Gastrocnemius medialis (tissue), 4 donors: ENCODE measurements at regions of chr20 and their contacts with region 1.

Region 1: DNA sequence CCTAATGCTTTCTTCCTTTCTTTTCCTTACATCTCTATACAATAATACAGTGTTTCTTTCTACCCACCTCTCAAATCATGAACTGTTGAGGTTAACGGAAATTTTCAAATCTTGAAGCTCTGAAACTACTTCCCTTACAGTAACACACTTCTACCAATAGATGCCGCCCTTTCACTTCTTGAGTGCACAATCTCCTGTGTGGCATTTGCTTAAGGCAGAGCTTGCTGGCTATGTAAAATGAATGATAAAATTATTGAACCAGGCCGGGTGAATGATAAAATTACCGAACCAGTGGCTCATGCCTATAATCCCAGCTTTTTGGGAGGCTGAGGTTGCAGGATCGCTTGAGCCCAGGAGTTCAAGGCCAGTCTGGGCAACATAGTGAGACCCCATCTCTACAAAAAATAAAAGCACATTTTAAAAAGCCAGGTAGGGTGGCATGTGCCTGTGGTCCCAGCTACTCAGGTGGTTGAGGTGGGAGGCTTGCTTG is 56.8 kb downstream of the KCNS1 start:
- DNase-seq: peak in 1 of 2 donors; percentile 21
- ATAC-seq: peak; percentile 83 to 87
- H3K4me3 ChIP-seq: no peak overlapping the region
- H3K27ac ChIP-seq: no peak overlapping the region
- H3K4me1 ChIP-seq: peaks cover 4 to 5% of the 10 kb centered on the region in 2 donors
- H3K27me3 ChIP-seq: no peaks in the 10 kb centered on the region
- CTCF ChIP-seq: peak; percentile 43 to 84 (median 77)
- POLR2A ChIP-seq: no peak

Region 2: GRCh38 chr20:45095753-45096371 is 51.7 kb after region 1 on chr20:
- in situ Hi-C with region 1: loop called in 2 of 4 experiments (anchors 10 kb)
- intact Hi-C with region 1: loop called (anchors 1 kb)
- DNase-seq: peak; percentile 10 to 22
- ATAC-seq: peak; percentile 20 to 81
- H3K4me3 ChIP-seq: no peak overlapping the region
- H3K27ac ChIP-seq: no peak overlapping the region
- H3K4me1 ChIP-seq: no peaks in the 10 kb centered on the region
- H3K27me3 ChIP-seq: peaks cover 43 to 48% (median 43%) of the 10 kb centered on the region in 3 donors
- CTCF ChIP-seq: peak; percentile 39 to 72 (median 50)
- POLR2A ChIP-seq: no peak

Region 3: DNA sequence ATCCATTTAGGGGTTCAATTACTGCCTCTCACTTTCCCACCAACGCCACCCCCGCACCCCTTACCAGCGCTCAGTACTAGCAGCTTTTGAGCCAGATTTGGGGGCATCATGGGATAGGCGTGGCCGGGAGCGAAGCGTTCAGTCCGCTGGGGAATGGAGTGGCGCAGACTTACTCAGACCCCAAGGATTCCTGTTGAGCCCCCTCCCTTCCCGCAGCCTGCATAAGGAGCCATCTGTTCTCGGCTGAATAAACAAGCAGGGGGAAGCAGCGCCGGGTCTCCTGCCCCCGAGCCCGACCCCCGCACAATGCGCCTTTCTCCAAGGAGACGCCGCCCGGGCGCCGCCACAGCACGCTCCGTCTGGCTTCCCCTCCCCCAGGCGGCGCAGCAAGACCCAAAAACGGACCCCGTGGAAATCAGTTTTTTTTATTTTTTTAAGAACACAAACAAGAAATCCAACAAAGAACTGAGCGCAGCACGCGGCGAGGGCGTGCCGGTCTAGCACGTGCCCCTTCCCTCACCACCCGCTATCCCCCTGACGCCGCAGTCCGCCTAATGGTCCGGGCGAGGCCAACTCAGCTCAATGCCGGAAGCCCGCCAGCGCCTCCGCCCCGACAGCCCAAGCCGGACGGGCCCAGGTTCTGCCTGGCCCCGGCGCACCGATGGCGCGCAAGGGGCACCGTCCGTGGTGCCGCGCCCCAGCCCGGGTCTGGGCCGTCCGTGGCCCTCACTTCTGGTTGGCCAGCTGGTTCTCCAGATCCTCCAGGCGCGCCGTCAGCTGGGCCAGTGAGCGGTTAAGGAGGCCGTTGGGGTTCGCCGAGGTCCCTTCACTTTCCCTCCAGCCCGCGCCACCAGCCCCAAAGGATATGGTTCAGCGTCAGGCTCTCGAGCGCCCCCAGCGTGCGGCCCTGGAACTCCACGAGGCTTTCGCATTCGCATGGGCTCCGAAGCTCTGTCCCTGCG is 249.2 kb after region 1 on chr20:
- in situ Hi-C with region 1: loop called in 3 of 4 experiments (anchors 25 kb)
- intact Hi-C with region 1: loop called (anchors 5 kb)
- DNase-seq: peak; percentile 33 to 55
- ATAC-seq: peak; percentile 74 to 80
- H3K4me3 ChIP-seq: peak overlapping the region; percentile 46 to 71 (median 58)
- H3K27ac ChIP-seq: no peak overlapping the region
- H3K4me1 ChIP-seq: peaks cover 0 to 5% of the 10 kb centered on the region in 2 donors
- H3K27me3 ChIP-seq: peaks cover 11 to 24% (median 14%) of the 10 kb centered on the region in 3 donors
- CTCF ChIP-seq: peak; percentile 67 to 95 (median 86)
- POLR2A ChIP-seq: no peak

Region 4: GRCh38 chr20:45300961-45301360 is 256.8 kb after region 1 on chr20:
- in situ Hi-C with region 1: loop called (anchors 10 to 25 kb)
- intact Hi-C with region 1: no loop called
- DNase-seq: no peak
- ATAC-seq: no peak
- H3K4me3 ChIP-seq: no peak overlapping the region
- H3K27ac ChIP-seq: no peak overlapping the region
- H3K4me1 ChIP-seq: no peaks in the 10 kb centered on the region
- H3K27me3 ChIP-seq: peaks cover 1 to 25% (median 8%) of the 10 kb centered on the region in 3 donors
- CTCF ChIP-seq: no peak
- POLR2A ChIP-seq: no peak

Region 5: GRCh38 chr20:45311589-45312211 is 267.6 kb after region 1 on chr20:
- in situ Hi-C with region 1: loop called in 1 of 4 experiments (anchors 10 kb)
- intact Hi-C with region 1: loop called (anchors 5 kb)
- DNase-seq: no peak
- ATAC-seq: no peak
- H3K4me3 ChIP-seq: no peak overlapping the region
- H3K27ac ChIP-seq: no peak overlapping the region
- H3K4me1 ChIP-seq: peaks cover 0 to 5% of the 10 kb centered on the region in 2 donors
- H3K27me3 ChIP-seq: peaks cover 6 to 20% (median 13%) of the 10 kb centered on the region in 3 donors
- CTCF ChIP-seq: peak; percentile 35 to 82 (median 69)
- POLR2A ChIP-seq: no peak

Region 6: DNA sequence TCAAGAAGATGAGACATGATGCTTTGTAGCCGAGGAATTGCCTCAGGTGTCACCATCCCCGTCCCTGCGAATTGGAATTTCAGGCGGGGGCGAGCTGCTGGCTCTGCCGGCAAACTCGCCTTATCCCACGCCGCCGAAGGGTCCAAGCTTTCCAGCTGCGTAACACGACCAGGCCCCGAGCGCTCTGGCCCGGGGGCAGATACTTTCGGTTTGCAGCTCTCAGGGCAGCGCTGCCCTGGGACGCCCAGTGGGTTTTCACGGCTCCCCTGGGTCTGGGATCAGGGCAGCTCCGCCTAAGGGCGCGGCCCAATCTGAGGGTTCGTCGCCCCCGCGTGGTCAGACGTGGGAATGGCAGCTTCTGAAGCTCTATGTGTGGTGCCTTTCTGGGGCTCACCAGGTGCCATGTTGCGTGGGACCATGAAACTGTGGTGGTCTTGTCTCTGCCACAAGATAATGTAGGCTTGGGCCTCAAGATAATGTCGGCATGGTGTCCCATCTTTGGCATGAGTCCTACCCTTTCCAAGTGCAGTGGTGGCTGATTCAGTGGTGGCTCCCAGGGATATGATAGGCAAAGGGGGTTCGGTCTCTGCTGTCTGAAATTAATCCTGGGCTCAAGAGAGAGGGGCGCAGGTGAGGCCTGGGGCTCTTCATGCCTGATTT is 392.7 kb after region 1 on chr20:
- in situ Hi-C with region 1: loop called in 1 of 4 experiments (anchors 25 kb)
- intact Hi-C with region 1: no loop called
- DNase-seq: peak; percentile 64 to 87
- ATAC-seq: peak; percentile 94 to 96
- H3K4me3 ChIP-seq: peak overlapping the region; percentile 60 to 82 (median 74)
- H3K27ac ChIP-seq: peak overlapping the region; percentile 81 to 86 (median 84)
- H3K4me1 ChIP-seq: peaks cover 4 to 6% of the 10 kb centered on the region in 2 donors
- H3K27me3 ChIP-seq: no peaks in the 10 kb centered on the region
- CTCF ChIP-seq: peak; percentile 94 to 98 (median 97)
- POLR2A ChIP-seq: no peak